AG04449 (cell line): ENCODE measurements at regions of chr12 and their contacts with region 1.

Region 1: GRCh38 chr12:2034633-2035430 is 18.0 kb upstream of the CACNA1C start:
- DNase-seq: no peak
- H3K4me3 ChIP-seq: peak overlapping the region; percentile 47
- CTCF ChIP-seq: peak; percentile 92

Region 2: GRCh38 chr12:1473418-1473817 is 561.4 kb before region 1 on chr12:
- CTCF ChIA-PET with region 1: no interaction called
- POLR2A ChIA-PET with region 1: no interaction called
- DNase-seq: no peak
- H3K4me3 ChIP-seq: no peak overlapping the region
- CTCF ChIP-seq: no peak

Region 3: DNA sequence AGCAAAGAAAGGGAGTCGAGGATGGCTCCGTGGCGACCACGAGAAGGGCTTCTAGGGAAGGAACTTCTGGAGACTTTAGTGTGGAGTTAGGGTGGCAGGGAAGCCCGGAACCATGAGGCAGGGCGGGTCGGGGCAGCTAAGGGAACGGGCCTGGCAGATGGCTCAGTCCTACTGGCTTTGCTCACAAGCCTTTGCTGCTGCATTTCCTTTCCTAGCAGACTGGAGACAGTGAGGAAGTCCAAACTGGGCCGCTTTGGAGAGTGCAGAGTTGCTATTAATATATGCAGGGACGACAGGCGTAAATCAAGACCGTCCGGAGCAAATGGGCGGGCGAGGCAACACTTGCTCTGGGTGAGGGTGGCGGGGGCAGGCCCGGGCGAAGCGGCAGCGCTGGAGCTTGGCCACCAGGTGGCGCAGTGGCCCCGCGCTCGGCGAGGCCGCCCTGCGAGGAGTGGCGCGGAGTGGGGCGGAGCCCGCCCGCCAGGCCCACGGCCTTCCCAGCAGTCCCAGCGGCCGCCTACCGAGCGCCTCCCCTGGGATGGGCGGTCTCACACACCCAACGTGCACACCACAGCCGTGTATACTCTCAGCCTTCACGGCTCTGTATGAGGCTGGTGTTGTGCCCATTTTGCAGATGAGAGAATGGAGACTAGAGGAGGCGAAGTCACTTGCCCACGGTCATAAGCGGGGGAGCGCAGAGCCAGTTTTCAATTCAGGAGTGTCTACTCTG is 238.9 kb before region 1 on chr12:
- CTCF ChIA-PET with region 1: interaction called, 14 read pairs
- POLR2A ChIA-PET with region 1: no interaction called
- DNase-seq: no peak
- H3K4me3 ChIP-seq: peak overlapping the region; percentile 47
- CTCF ChIP-seq: peak; percentile 88

Region 4: DNA sequence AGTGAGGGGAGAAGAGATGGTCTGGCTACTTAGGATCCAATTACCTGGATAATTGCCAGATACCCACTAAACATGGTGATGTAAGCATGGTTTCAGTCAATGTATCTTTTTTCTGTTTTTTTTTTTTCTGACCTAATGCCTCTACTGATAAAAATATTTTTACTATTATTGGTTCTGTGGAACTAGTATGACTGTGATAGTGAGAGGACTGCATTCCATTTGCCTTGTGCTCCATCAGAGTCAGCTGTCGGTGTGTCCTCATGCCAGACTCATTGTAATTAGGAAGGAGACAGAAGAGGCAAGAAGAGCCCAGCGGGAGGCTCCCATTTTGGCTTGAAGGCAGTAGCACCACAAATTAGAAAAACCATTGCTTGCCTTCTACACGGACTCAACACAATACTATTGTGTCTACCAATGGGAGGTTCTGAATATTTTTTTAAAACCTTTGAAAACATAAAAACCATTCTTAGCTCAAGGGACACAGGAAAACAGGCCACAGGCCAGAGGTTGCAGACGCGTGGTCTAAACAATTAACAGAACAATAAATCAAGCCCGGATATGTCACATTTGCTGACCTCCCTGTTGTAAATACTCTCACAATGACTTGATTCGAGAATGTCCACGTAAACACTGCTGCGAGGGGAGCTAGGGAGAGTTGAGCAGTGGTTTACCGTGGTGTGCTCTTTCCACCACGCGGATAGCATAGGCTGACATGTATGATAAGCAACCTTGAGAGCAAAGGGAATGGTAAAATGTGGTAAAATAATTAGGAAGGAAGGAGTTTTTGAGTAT is 17.1 kb before region 1 on chr12:
- CTCF ChIA-PET with region 1: interaction called, 57 read pairs
- POLR2A ChIA-PET with region 1: no interaction called
- DNase-seq: no peak
- H3K4me3 ChIP-seq: no peak overlapping the region
- CTCF ChIP-seq: no peak

Region 5: DNA sequence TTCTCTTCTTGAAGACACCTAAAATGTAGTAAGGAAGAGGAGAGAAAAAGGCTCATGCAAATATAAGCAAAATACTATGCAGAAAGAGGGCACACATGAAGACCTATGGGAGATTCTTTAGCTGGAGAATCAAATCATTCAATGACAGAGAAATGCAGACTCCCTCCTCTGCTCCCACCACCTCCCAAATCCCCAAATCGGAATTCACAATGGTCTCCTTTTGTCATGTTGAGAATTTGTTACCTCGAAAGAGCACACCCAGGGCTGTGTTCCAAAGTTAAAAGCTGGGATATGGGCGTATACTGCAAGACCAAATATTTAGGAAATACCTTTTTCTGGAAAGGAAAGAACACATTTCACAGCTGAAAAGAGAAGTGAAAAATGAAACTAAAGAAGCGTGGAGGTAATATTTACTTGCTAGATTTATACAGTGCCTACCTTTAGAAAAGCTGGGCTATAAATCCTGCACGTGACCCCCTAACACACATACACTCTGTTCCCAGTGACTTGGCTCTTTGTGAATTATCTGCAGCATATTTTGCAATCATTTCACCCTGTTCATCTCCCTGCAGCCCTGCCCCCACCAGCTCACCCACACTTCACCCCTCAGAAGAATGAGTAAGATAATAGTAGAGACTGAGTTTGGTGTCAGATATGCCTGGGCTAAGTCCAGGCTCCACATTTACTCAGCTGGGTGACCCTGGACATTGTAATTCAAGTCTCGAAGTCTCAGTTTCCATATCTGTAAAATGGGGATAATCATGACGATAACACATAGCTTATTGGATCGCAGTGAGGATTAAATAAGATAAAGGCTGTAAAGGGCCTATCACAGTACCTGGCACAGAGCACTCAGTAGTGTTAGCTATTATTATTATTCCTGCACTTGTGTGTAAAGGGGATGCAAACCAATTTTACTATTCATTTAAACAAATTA is 15.0 kb after region 1 on chr12:
- CTCF ChIA-PET with region 1: interaction called, 33 read pairs
- POLR2A ChIA-PET with region 1: no interaction called
- DNase-seq: no peak
- H3K4me3 ChIP-seq: no peak overlapping the region
- CTCF ChIP-seq: no peak

Region 6: DNA sequence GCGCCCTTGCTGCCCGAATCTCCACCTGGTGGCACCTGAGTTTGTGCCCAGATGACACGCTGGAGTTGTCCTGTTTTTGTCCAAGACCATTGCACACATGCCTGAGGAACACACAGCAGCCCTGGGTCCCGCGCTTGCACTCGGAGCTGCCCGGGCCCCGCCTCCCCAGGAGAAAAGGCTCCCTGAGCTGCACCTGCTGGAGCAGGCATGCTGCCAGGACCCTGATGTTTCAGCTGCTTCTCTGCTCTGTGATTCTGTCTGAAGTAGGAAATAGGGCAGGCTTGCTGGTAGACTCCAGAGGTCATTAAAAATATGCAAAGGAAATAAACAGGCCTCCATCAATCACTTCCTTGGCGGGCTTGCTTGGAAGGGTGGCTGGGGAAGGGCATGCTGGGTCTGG is 289.6 kb after region 1 on chr12:
- CTCF ChIA-PET with region 1: no interaction called
- POLR2A ChIA-PET with region 1: no interaction called
- DNase-seq: no peak
- H3K4me3 ChIP-seq: no peak overlapping the region
- CTCF ChIP-seq: no peak

Region 7: DNA sequence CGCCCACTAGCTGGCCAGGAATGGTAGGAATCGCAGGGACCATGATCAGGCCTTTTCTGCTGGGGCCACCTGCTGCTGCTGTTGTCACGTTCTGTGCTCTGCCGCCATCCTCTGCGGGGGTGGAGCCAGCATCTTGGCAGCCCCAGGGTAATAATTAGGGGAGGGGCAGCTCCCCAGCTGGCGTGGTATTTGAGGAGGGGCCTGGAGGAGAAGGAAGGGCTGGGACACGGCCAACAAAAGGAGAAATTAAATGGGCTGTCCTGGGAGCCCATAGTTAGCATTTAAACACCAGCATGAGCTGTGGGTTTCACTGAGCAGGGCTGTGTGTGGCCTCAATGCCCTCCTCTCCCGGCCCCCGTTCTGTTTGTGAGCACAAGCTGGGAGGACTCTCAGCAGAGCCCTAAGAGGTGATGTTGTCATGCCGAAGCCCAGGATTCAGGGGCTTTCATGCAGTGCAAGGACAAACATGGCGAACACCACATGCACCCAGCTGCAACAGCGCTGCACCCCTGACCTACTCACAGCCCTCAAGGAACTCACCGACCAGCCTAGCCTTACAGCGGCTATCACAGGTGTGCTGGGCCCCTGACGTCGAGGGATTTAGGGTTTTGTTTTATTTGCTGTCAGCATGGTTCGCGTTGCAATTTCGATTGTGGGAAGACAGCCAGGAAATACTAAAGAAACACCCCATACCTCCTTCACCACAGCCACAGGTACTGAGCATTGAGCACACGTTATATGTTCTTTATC is 342.3 kb after region 1 on chr12:
- CTCF ChIA-PET with region 1: no interaction called
- POLR2A ChIA-PET with region 1: no interaction called
- DNase-seq: no peak
- H3K4me3 ChIP-seq: no peak overlapping the region
- CTCF ChIP-seq: no peak

Region 8: DNA sequence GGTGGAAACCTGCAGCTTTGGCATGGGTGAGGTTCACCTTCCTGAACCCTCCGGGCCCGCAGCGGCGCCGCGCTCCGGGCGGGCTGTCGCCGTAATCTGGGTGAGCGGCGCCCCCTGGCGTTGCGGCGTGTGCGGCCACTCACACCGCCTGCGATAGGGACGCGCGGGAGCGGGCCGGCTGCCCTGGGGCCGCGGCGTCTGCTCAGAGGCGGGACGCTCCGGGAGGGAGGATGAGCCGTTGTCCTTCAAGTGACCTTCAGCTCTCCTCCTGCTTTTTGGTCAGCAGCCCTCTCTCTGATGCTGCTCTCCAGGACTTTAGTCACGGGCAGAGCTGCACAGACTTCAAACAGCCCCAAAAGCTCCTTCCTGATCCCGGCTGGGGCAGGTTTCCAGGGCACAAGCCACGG is 548.3 kb after region 1 on chr12:
- CTCF ChIA-PET with region 1: interaction called, 10 read pairs
- POLR2A ChIA-PET with region 1: no interaction called
- DNase-seq: no peak
- H3K4me3 ChIP-seq: peak overlapping the region; percentile 32
- CTCF ChIP-seq: peak; percentile 87